Lower leg skin (tissue), 4 donors: ENCODE measurements at regions of chr11 and their contacts with region 1.

Region 1: GRCh38 chr11:45102810-45103621 is 43.4 kb upstream of the PRDM11 start:
- DNase-seq: peak; percentile 42 to 90
- H3K4me3 ChIP-seq: no peak overlapping the region
- CTCF ChIP-seq: peak in 1 of 3 donors; percentile 50
- POLR2A ChIP-seq: no peak

Region 2: GRCh38 chr11:44936525-44936924 is 166.5 kb before region 1 on chr11:
- intact Hi-C with region 1: loop called (anchors 2 kb)
- DNase-seq: peak; percentile 82 to 98
- H3K4me3 ChIP-seq: no peak overlapping the region
- CTCF ChIP-seq: peak in 2 of 3 donors; percentile 55 to 90
- POLR2A ChIP-seq: no peak

Region 3: DNA sequence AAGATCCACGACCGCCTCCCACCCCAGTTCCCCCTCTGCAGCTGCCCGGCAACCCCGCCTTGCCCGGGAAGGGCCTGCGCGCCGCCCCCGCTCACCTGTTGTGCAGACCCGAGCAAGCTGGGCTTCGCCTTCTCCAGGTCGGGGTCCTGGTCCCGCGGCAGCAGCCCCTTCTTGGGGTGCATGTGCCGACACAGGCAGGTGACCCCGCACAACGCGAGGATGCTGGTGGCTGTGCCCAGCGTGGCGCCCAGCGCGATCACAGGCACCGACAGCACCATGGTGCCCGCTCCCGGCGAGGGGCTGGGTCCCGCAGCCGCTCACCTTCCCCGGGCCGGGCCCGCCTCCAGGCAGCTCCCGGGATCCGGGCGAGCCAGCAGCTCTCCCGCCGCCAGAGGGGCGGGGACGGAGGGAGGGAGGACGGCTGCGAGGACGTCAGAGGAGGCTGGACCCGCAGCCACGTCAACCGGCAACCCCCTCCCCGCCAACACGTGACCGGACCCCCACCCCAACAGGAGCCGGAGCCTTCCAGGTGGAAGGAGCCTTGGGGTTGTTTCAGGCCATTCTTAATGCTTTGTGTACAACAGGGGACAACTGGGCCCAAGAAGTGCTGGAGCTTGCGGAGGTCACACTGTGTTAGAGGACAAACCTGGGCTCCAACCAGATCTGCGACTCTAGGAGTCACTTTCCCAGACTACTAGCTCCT is 183.1 kb after region 1 on chr11 and contains the start of gene SYT13:
- intact Hi-C with region 1: loop called (anchors 5 kb)
- DNase-seq: no peak
- H3K4me3 ChIP-seq: no peak within 1 kb of the TSS
- CTCF ChIP-seq: no peak
- POLR2A ChIP-seq: no peak
- total RNA-seq, gene SYT13: 0.03 to 1.6 TPM in 2 of 4 donors, not detected in the others

Region 4: GRCh38 chr11:45390407-45390806 is 287.4 kb after region 1 on chr11:
- intact Hi-C with region 1: no loop called
- DNase-seq: no peak
- H3K4me3 ChIP-seq: no peak overlapping the region
- CTCF ChIP-seq: no peak
- POLR2A ChIP-seq: no peak

Region 5: GRCh38 chr11:46183819-46184218 is 1080.8 kb after region 1 on chr11:
- intact Hi-C with region 1: no loop called
- DNase-seq: no peak
- H3K4me3 ChIP-seq: no peak overlapping the region
- CTCF ChIP-seq: no peak
- POLR2A ChIP-seq: no peak